Right cardiac atrium (tissue), 5 donors: ENCODE measurements at regions of chr5 and their contacts with region 1.

Region 1: DNA sequence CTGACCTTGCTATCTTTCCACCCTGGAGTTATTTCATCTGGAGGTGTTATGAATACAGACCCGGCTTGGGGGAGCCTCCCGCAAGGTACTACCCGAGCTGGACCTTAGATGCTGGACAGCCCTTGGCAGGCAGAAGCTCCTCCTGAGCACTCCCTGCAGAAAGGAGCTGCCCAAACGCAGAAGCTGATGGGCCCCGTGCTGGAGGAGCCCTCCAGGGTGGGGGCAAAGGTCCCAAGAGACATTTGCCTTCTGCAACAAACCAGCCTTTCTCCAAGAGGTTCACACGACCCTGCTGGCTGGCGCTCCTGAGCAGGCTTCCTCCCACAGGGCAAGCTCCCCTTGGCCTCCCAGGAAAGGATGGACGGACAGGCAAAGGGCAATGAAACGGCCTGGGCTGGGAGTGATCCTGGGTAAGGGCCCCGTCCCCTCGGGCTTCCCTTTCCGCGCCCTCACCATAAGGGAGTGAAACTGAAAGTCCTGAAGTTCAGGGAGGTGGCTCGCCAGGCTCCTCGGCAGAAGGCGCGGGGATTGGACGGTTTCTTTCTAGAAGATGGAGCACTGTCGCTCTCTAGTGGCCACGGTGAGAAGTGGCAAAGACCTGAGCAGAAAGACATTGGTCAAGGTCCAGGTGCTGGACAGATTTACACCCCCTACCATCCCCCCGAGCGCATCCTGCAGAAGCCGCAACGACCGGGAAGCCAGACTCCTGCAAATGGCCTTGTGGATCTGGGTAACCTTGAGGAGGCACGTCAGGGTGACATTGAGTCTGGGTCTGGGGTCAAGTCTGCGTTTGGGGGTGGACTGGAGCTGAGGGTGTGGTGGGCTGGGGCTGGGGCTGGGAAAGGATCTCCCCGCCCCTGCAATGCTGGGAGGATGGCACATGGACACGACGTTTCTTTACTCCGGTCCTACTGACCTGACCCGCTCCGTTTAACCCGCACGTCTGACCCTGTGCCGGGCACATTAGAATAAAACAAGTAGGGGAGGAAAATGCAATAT is 56.4 kb downstream of the NEURL1B start:
- DNase-seq: peak; percentile 90 to 95 (median 94)
- ATAC-seq: peak; percentile 76 to 77
- H3K4me3 ChIP-seq: peak overlapping the region; percentile 21
- H3K27ac ChIP-seq: peak overlapping the region; percentile 24
- H3K4me1 ChIP-seq: peaks cover 5% of the 10 kb centered on the region
- H3K27me3 ChIP-seq: no peaks in the 10 kb centered on the region

Region 2: DNA sequence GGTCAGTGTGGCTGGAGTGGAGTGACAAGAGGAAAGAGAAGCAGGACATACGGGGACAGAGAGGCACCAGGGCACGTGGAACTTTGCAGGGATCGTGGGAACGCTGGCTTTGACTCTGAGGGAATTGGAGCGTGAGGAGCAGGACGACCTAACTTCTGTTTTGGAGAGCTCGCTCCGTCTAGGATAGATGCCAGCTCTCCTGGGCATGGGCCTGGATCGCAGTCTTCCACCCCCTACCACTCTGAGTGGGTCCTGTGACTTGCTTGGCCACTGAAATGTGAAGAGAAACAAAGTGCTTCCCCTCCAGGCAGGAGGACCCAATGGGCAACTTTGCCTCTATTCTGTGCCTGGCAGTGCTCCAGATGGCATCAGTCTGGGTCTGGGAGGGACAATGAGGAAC is 234.4 kb before region 1 on chr5:
- intact Hi-C with region 1: loop called in 2 of 4 experiments (anchors 5 kb)
- DNase-seq: no peak
- ATAC-seq: no peak
- H3K4me3 ChIP-seq: no peak overlapping the region
- H3K27ac ChIP-seq: no peak overlapping the region
- H3K4me1 ChIP-seq: no peaks in the 10 kb centered on the region
- H3K27me3 ChIP-seq: no peaks in the 10 kb centered on the region

Region 3: DNA sequence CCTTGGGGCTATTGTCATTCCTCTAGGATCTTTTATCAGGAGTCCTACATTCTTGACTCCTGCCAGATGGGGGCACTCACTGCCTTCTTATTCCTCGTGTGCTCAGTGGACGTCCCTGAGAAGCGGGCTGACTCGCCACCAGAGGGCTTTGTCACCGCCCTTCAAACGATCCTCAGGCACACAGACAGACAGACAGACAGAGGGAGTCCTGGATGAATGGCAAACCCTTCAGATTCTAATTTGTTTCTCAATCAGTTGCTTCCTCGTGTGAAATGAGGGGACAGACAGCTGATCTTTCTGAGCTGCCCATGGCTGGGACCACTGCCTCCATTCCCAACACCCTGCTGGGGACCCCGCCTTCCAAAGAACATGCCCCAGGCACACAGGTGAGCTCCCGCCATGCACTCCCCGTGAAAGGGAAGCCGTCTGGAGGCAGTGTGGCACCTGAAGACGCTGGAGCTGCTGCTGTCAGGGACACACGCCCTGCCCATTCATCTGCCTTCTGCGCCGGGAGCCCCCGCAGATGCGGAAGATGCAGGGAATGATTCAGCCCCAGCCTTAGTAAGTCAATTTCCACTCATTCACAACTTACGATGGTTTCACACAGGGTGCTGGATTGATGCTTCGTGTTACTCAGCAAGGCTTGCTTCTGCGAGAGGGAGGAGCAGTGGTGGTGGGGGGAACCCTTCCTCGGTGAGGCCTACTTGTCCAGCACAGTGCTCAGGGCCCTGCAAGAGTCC is 218.2 kb before region 1 on chr5:
- intact Hi-C with region 1: loop called (anchors 1 to 2 kb)
- DNase-seq: peak; percentile 91 to 94 (median 92)
- ATAC-seq: peak; percentile 96
- H3K4me3 ChIP-seq: no peak overlapping the region
- H3K27ac ChIP-seq: peak overlapping the region; percentile 58
- H3K4me1 ChIP-seq: peaks cover 3% of the 10 kb centered on the region
- H3K27me3 ChIP-seq: no peaks in the 10 kb centered on the region

Region 4: GRCh38 chr5:172640822-172641358 is 56.5 kb before region 1 on chr5 and contains the start of gene NEURL1B:
- intact Hi-C with region 1: loop called in 3 of 4 experiments (anchors 10 kb)
- DNase-seq: peak; percentile 84 to 94 (median 93)
- ATAC-seq: peak; percentile 88 to 89
- H3K4me3 ChIP-seq: peak within 1 kb of the TSS; percentile 84
- H3K27ac ChIP-seq: peak within 1 kb of the TSS; percentile 91
- H3K4me1 ChIP-seq: no peaks in the 10 kb centered on the region
- H3K27me3 ChIP-seq: no peaks in the 10 kb centered on the region
- total RNA-seq, gene NEURL1B: 13.2 to 23.1 (median 18.1) TPM

Region 5: DNA sequence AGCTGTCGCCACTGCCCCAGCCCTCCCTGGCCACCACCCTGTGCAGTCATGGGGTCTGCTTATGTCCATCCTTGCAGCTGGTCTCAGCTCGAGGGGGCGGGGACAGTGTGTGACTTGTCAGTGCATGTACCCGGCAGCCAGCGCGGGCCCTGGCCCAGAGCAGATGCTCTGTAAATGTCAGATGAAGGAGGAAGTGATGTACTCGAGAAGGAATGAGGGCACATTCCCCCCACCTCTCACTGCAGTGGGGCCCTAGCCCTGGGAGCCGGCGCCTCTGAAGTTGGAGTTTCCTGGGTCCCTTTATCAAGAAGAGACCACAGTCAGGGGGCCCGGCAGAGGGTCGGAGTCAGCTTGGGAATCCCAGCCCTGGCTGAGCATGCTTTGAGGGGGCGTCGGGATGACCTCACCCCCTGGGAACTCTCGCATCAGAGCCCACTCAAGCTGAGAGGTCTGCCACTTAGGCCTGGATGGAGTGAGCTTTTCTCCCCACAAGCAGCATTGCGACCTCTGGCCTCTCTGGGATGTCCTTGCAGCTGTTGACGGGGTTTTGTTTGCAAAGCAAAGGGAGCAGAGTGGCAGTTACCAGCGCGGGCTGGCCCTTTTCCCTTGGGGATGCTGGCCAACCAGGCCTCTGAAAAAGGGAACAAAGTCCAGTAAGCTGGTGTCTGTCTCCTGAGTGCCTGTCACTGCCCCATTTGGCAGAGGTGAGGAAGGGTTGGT is 37.4 kb before region 1 on chr5:
- intact Hi-C with region 1: loop called in 1 of 4 experiments (anchors 5 kb)
- DNase-seq: peak; percentile 93 to 95 (median 95)
- ATAC-seq: peak; percentile 92 to 93
- H3K4me3 ChIP-seq: no peak overlapping the region
- H3K27ac ChIP-seq: peak overlapping the region; percentile 59
- H3K4me1 ChIP-seq: peaks cover 29% of the 10 kb centered on the region
- H3K27me3 ChIP-seq: no peaks in the 10 kb centered on the region